ENCODE measurements at regions of chr10 and their contacts with region 1.

Region 1: GRCh38 chr10:13891128-13892000 is 304.6 kb downstream of the PRPF18 start:
- DNase-seq: peak in 3 of 5 donors; percentile 35 to 70 (median 40)
- ATAC-seq: peak in 3 of 4 donors; percentile 37 to 66 (median 41)
- H3K4me3 ChIP-seq: peak overlapping the region; percentile 39 to 85 (median 65)
- H3K27ac ChIP-seq: peak overlapping the region; percentile 21 to 86 (median 76)
- H3K4me1 ChIP-seq: peaks cover 0 to 60% (median 22%) of the 10 kb centered on the region in 12 donors
- H3K27me3 ChIP-seq: peaks cover 0 to 30% (median 0%) of the 10 kb centered on the region in 9 donors
- CTCF ChIP-seq: no peak
- POLR2A ChIP-seq: no peak

Region 2: DNA sequence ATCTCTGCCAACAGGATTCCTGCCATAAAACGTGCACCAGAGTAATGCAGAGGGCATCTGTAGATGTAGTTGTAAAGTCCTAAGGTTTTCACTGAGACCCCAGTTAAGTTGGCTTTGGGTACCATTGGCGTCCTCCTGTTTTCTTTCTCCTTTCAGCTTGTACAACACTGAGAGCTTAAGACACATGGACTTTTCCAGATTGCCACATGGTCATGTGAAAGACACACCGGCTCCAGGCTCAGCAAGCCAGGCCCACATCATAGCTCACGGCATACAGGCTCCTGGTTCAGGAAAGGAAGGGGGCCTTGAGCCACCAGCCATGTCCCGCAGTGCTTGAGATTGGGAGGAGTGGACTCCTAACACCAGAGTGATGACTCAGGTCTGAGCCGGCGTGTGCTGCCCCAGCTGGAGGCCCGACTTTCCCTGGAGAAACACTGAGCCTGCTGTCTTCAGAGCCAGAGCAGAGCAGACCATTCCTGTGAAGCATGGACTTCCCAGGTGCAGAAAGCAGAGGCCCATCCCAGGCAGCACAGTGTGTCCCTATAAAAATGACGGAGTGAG is 51.9 kb before region 1 on chr10:
- intact Hi-C with region 1: loop called in 1 of 10 experiments (anchors 5 kb)
- DNase-seq: peak in 3 of 5 donors; percentile 56 to 75 (median 73)
- ATAC-seq: peak; percentile 56 to 88 (median 69)
- H3K4me3 ChIP-seq: no peak overlapping the region
- H3K27ac ChIP-seq: peak overlapping the region in 9 of 12 donors; percentile 13 to 54 (median 30)
- H3K4me1 ChIP-seq: peaks cover 0 to 68% (median 43%) of the 10 kb centered on the region in 12 donors
- H3K27me3 ChIP-seq: no peaks in the 10 kb centered on the region
- CTCF ChIP-seq: no peak
- POLR2A ChIP-seq: no peak

Region 3: GRCh38 chr10:13865758-13866491 is 25.4 kb before region 1 on chr10:
- intact Hi-C with region 1: loop called in 1 of 10 experiments (anchors 1 kb)
- DNase-seq: peak; percentile 46 to 68 (median 57)
- ATAC-seq: peak in 3 of 4 donors; percentile 71 to 92 (median 83)
- H3K4me3 ChIP-seq: peak overlapping the region in 5 of 12 donors; percentile 1 to 28 (median 20)
- H3K27ac ChIP-seq: peak overlapping the region; percentile 37 to 76 (median 68)
- H3K4me1 ChIP-seq: peaks cover 0 to 36% (median 11%) of the 10 kb centered on the region in 12 donors
- H3K27me3 ChIP-seq: no peaks in the 10 kb centered on the region
- CTCF ChIP-seq: no peak
- POLR2A ChIP-seq: no peak

Region 4: DNA sequence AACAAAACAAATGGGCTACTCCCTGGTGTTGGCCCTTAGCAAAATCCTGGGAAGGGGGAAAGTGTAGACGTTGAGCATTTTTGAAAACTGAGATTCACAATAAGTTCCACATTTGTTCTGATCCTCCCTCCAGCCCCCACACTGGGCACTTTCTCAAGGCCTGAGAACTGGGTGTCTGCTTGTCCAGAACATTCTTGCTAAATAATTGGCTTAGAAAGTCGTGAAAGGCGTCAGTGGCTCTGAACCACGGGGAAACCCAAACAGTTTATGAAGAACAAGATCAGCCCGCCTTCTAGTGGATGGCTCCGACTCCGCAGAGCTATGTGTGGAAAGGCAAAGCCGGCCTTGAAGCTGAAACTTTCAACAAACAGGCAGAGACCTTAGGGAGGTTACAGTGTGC is 65.5 kb after region 1 on chr10:
- intact Hi-C with region 1: loop called in 1 of 10 experiments (anchors 5 kb)
- DNase-seq: peak; percentile 54 to 78 (median 62)
- ATAC-seq: peak; percentile 69 to 90 (median 83)
- H3K4me3 ChIP-seq: no peak overlapping the region
- H3K27ac ChIP-seq: peak overlapping the region in 7 of 12 donors; percentile 38 to 74 (median 45)
- H3K4me1 ChIP-seq: peaks cover 0 to 30% (median 12%) of the 10 kb centered on the region in 12 donors
- H3K27me3 ChIP-seq: no peaks in the 10 kb centered on the region
- CTCF ChIP-seq: peak in 7 of 12 donors; percentile 25 to 67 (median 47)
- POLR2A ChIP-seq: no peak

Region 5: GRCh38 chr10:13990946-13991345 is 99.6 kb after region 1 on chr10:
- intact Hi-C with region 1: loop called in 2 of 10 experiments (anchors 5 kb)
- DNase-seq: peak in 2 of 5 donors; percentile 31
- ATAC-seq: peak; percentile 27 to 53 (median 40)
- H3K4me3 ChIP-seq: peak overlapping the region in 7 of 12 donors; percentile 3 to 39 (median 24)
- H3K27ac ChIP-seq: peak overlapping the region; percentile 59 to 89 (median 80)
- H3K4me1 ChIP-seq: peaks cover 0 to 60% (median 35%) of the 10 kb centered on the region in 12 donors
- H3K27me3 ChIP-seq: no peaks in the 10 kb centered on the region
- CTCF ChIP-seq: no peak
- POLR2A ChIP-seq: no peak